H1 (cell line): ENCODE measurements at regions of chr2 and their contacts with region 1.

Region 1: GRCh38 chr2:12549641-12550040 is 167.1 kb upstream of the TRIB2 start:
- DNase-seq: no peak
- H3K4me3 ChIP-seq: no peak overlapping the region
- H3K27ac ChIP-seq: no peak overlapping the region
- H3K4me1 ChIP-seq: no peaks in the 10 kb centered on the region
- H3K27me3 ChIP-seq: no peaks in the 10 kb centered on the region
- CTCF ChIP-seq: no peak
- EP300 ChIP-seq: no peak
- POLR2A ChIP-seq: no peak
- RAD21 ChIP-seq: no peak

Region 2: DNA sequence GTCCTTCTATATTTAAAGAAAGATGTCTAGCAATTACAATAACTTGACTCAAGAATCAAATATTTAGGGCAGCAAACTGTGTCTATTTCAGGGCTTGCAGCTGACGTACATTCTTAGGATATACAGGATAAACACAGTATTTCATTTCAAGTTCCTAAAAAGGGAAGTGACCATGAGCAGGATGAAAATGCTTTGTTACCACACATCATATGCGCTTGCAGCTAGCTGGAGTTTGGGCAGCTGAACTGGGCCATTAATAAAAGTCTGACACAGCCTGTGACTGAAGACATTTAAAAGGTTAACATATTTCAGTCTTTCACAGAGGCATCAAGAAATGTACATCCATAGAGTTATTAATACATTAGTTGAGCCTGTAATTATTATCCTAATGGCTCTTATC is 97.4 kb before region 1 on chr2:
- CTCF ChIA-PET with region 1: no interaction called
- POLR2A ChIA-PET with region 1: no interaction called
- DNase-seq: no peak
- H3K4me3 ChIP-seq: no peak overlapping the region
- H3K27ac ChIP-seq: no peak overlapping the region
- H3K4me1 ChIP-seq: peaks cover 0 to 3% (median 1%) of the 10 kb centered on the region in 4 experiments; a peak in 3 of 7 replicates
- H3K27me3 ChIP-seq: no peaks in the 10 kb centered on the region
- CTCF ChIP-seq: no peak
- EP300 ChIP-seq: no peak
- POLR2A ChIP-seq: no peak
- RAD21 ChIP-seq: no peak

Region 3: GRCh38 chr2:12479065-12479601 is 70.5 kb before region 1 on chr2:
- CTCF ChIA-PET with region 1: no interaction called
- POLR2A ChIA-PET with region 1: no interaction called
- DNase-seq: no peak
- H3K4me3 ChIP-seq: no peak overlapping the region
- H3K27ac ChIP-seq: no peak overlapping the region
- H3K4me1 ChIP-seq: no peaks in the 10 kb centered on the region
- H3K27me3 ChIP-seq: no peaks in the 10 kb centered on the region
- CTCF ChIP-seq: no peak
- EP300 ChIP-seq: no peak
- POLR2A ChIP-seq: no peak
- RAD21 ChIP-seq: no peak

Region 4: DNA sequence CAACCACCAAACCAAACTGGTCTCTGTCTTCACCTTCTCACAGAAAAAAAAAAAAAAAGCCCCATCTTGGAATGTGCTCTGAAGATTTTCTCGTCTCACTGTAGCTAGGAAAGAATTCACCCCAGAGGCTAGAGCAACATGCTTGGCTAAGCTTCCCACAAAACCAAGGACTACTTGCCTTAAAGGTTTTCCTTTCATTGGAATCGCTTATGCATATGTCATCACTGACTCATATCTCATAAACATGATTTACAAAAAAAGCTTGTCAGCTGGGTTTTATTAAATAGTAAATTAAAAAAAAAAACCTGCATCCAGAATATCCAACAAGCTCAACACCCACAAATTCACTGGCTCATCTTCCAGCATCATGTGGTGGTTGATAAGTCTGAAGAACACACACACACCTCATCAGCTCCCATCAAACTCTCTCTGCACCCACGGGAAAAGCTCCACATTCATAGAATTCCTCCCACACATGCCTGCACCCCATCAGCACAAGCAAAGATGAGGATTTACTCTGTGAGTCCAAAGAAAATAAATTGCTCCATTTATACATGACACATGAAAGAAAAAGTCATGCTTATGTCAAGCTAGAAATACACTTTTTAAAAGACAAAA is 14.9 kb before region 1 on chr2:
- CTCF ChIA-PET with region 1: interaction called, 26 read pairs
- POLR2A ChIA-PET with region 1: no interaction called
- DNase-seq: no peak
- H3K4me3 ChIP-seq: no peak overlapping the region
- H3K27ac ChIP-seq: no peak overlapping the region
- H3K4me1 ChIP-seq: no peaks in the 10 kb centered on the region
- H3K27me3 ChIP-seq: no peaks in the 10 kb centered on the region
- CTCF ChIP-seq: no peak
- EP300 ChIP-seq: no peak
- POLR2A ChIP-seq: no peak
- RAD21 ChIP-seq: no peak